ENCODE measurements at regions of chr5 and their contacts with region 1.

Region 1: DNA sequence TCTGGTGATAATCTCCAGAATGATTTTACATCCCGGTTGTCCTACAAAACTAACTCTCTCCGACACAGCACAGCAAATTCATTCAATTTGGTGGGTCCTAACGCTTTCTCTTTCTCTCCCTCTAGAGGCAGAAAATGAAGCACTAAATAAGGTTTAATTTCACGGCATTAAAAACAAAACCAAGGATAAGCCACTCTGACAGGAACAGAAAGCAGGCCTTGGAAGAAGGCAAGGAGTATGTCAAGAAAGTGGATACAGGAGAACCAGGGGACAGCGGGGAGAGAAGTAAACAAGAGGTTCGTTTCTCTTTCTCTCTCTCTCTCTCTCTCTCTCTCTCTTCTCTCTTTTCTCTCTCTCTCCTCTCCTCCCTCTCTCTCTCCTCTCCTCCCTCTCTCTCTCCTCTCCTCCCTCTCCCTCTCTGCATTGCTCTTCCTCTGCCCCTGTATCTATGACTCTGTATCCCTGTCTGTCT is 49.8 kb downstream of the EBF1 start:
- DNase-seq: peak; percentile 51
- H3K4me3 ChIP-seq: peak overlapping the region; percentile 50
- H3K27ac ChIP-seq: peak overlapping the region; percentile 86
- H3K4me1 ChIP-seq: peaks cover 86% of the 10 kb centered on the region
- CTCF ChIP-seq: peak; percentile 81

Region 2: DNA sequence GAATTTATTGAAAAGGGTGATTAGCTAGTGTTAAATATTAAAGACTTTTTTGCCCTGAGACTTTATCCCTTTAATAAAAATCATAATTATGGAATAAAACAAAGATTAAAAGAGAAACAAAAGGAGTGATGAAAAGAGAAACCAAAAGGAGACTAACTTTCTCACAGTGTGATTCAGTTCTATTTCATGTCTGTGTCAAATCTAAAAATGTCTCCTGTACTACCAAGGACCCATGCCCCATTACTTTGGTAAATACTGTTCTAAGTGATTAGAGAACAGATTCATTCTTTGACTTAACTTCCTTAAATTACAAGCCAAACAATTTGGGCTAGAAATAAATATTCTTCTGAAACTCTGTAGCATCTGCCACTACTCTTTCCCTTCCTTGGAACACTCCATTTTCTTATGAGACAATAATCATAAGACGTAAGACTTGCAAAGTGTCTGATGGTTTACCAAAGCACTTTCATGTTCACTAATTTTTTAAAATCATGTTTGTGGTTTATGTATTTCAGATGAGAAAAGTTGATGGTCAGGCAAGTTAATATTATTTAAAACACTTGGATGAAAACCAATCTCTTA is 269.1 kb before region 1 on chr5:
- CTCF ChIA-PET with region 1: no interaction called
- POLR2A ChIA-PET with region 1: interaction called, 3 read pairs
- intact Hi-C with region 1: loop called (anchors 5 kb)
- DNase-seq: no peak
- H3K4me3 ChIP-seq: no peak overlapping the region
- H3K27ac ChIP-seq: no peak overlapping the region
- H3K4me1 ChIP-seq: peaks cover 58% of the 10 kb centered on the region
- CTCF ChIP-seq: no peak

Region 3: DNA sequence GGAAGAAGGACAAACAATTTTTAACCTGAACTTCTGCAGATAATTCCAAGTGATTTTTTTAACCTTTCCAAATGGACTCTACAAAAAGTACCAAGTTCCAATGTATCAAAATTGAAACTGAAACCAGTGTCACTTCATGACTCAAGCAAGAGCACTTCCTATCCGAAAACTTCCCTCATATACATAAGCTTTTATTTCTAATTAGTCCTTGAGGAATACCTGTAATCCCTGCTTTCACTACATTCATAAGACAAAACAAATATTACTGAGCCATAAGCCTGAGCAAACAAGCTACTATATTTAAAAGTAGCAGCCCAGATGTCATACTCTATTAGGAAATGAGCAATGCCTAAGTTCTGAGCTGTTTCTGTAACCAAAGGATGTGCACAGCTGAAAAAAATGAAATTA is 174.6 kb before region 1 on chr5:
- CTCF ChIA-PET with region 1: no interaction called
- POLR2A ChIA-PET with region 1: no interaction called
- intact Hi-C with region 1: loop called (anchors 1 kb)
- DNase-seq: peak; percentile 57
- H3K4me3 ChIP-seq: peak overlapping the region; percentile 60
- H3K27ac ChIP-seq: peak overlapping the region; percentile 92
- H3K4me1 ChIP-seq: peaks cover 74% of the 10 kb centered on the region
- CTCF ChIP-seq: no peak

Region 4: GRCh38 chr5:159010661-159011442 is 39.0 kb before region 1 on chr5:
- CTCF ChIA-PET with region 1: interaction called, 3 read pairs
- POLR2A ChIA-PET with region 1: interaction called, 8 read pairs
- intact Hi-C with region 1: loop called (anchors 2 kb)
- DNase-seq: peak; percentile 95
- H3K4me3 ChIP-seq: peak overlapping the region; percentile 73
- H3K27ac ChIP-seq: peak overlapping the region; percentile 100
- H3K4me1 ChIP-seq: peaks cover 80% of the 10 kb centered on the region
- CTCF ChIP-seq: no peak; the same call in 1 of the 2 replicates